PC-9 (cell line): ENCODE measurements at regions of chr22 and their contacts with region 1.

Region 1: GRCh38 chr22:43230971-43231723 is 44.2 kb upstream of the TTLL12 start:
- DNase-seq: peak in 1 of 2 experiments; percentile 77
- H3K4me3 ChIP-seq: no peak overlapping the region
- H3K27ac ChIP-seq: no peak overlapping the region
- H3K4me1 ChIP-seq: no peaks in the 10 kb centered on the region
- H3K27me3 ChIP-seq: peaks cover 46% of the 10 kb centered on the region
- CTCF ChIP-seq: peak; percentile 99

Region 2: DNA sequence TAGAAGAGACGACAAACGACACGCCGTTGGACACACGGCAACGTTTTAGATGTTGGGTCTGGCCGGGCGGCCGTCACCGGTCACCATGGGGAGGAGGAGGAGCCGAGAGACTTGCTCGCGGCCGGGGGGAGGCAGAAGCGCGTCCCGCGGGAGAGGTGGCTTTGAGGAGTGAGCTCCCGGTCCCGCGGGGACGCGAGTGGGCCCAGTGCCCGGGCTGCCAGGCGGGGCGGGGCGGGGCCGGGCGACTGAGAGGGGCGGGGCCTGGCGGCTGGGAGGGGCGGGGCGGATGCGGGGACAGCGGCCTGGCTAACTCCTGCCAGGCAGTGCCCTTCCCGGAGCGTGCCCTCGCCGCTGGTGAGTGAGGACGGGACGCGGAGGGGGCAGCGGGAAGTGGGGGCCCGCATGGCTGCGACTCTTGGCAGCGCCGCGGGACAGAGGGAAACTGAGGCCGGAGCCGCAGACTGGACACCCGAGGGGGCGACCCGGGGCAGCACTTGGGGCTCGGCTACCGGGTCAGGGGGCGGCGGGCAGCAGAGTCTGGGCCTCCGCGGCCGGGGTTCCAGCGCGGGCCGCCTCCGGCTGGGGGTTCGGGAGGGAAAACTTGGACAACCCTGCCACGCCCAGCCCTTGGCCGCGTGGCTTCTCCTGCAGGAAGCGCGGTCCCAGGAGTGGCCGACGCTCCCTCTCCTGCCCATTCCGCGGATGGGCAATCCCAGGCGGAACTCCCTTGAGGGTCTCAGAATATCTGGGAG is 79.7 kb before region 1 on chr22 and contains the start of gene TSPO:
- CTCF ChIA-PET with region 1: no interaction called
- POLR2A ChIA-PET with region 1: no interaction called
- intact Hi-C with region 1: no loop called
- DNase-seq: peak; percentile 34 to 60
- H3K4me3 ChIP-seq: peak within 1 kb of the TSS; percentile 88
- H3K27ac ChIP-seq: peak within 1 kb of the TSS; percentile 45; the same call in 1 of the 2 replicates
- H3K4me1 ChIP-seq: peaks cover 20% of the 10 kb centered on the region
- H3K27me3 ChIP-seq: no peaks in the 10 kb centered on the region
- CTCF ChIP-seq: no peak
- total RNA-seq, gene TSPO: 243 and 308 TPM in 2 replicates

Region 3: GRCh38 chr22:43180670-43181069 is 50.5 kb before region 1 on chr22:
- CTCF ChIA-PET with region 1: interaction called, 9 read pairs
- POLR2A ChIA-PET with region 1: no interaction called
- intact Hi-C with region 1: loop called (anchors 1 kb)
- DNase-seq: no peak
- H3K4me3 ChIP-seq: no peak overlapping the region
- H3K27ac ChIP-seq: no peak overlapping the region
- H3K4me1 ChIP-seq: peaks cover 29% of the 10 kb centered on the region
- H3K27me3 ChIP-seq: no peaks in the 10 kb centered on the region
- CTCF ChIP-seq: no peak

Region 4: GRCh38 chr22:43273902-43274484 is 42.8 kb after region 1 on chr22:
- CTCF ChIA-PET with region 1: interaction called, 4 read pairs
- POLR2A ChIA-PET with region 1: no interaction called
- intact Hi-C with region 1: loop called (anchors 5 kb)
- DNase-seq: peak; percentile 43 to 55
- H3K4me3 ChIP-seq: no peak overlapping the region
- H3K27ac ChIP-seq: no peak overlapping the region
- H3K4me1 ChIP-seq: peaks cover 15% of the 10 kb centered on the region
- H3K27me3 ChIP-seq: peaks cover 25% of the 10 kb centered on the region
- CTCF ChIP-seq: peak; percentile 92

Region 5: GRCh38 chr22:43346521-43346929 is 115.4 kb after region 1 on chr22:
- CTCF ChIA-PET with region 1: interaction called, 8 read pairs
- POLR2A ChIA-PET with region 1: no interaction called
- intact Hi-C with region 1: loop called (anchors 1 kb)
- DNase-seq: peak in 1 of 2 experiments; percentile 66
- H3K4me3 ChIP-seq: no peak overlapping the region
- H3K27ac ChIP-seq: no peak overlapping the region
- H3K4me1 ChIP-seq: no peaks in the 10 kb centered on the region
- H3K27me3 ChIP-seq: peaks cover 64% of the 10 kb centered on the region
- CTCF ChIP-seq: peak; percentile 74

Region 6: GRCh38 chr22:43363315-43364168 is 132.4 kb after region 1 on chr22:
- CTCF ChIA-PET with region 1: no interaction called
- POLR2A ChIA-PET with region 1: interaction called, 34 read pairs
- intact Hi-C with region 1: no loop called
- DNase-seq: no peak
- H3K4me3 ChIP-seq: no peak overlapping the region
- H3K27ac ChIP-seq: no peak overlapping the region
- H3K4me1 ChIP-seq: no peaks in the 10 kb centered on the region
- H3K27me3 ChIP-seq: peaks cover 97% of the 10 kb centered on the region
- CTCF ChIP-seq: no peak

Region 7: DNA sequence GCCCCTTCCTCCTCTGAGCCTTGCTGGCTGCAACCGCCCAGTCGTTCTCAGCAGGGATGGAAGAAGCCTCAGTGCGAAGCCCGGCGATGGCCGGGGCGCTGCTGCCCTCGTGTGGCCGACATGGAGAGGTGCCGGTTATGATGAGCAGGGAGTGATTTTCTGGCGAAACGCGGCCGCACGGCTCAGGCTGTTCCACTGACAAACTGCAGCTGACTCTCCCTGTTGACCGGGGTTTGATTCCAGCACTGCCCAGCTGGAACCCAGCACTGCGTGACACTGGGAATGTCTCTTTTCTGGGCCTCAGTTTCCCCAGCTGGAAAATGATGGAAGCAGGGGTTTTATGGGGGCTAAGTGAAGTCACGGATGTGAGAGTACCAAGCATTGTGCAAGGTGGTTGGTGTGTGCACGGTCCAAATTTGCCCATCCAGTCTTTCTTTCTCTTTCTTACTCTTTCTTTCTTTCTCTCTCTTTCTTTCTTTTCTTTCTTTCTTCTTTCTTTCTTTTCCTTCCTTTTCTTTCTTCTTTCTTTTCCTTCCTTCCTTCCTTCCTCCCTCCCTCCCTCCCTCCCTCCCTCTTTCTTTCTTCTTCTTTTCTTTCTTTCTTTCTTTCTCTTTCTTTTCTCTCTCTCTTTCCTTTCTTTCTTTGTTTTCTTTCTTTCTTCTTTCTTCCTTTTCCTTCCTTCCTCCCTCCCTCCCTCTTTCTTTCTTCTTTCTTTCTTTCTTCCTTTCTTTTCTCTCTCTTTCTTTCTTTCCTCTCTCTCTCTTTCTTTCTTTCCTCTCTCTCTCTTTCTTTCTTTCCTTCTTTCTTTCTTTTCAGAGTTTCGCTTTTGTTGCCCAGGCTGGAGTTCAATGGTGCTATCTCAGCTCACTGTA is 154.9 kb after region 1 on chr22:
- CTCF ChIA-PET with region 1: interaction called, 3 read pairs
- POLR2A ChIA-PET with region 1: no interaction called
- intact Hi-C with region 1: loop called (anchors 1 kb)
- DNase-seq: peak; percentile 48 to 68
- H3K4me3 ChIP-seq: no peak overlapping the region
- H3K27ac ChIP-seq: no peak overlapping the region
- H3K4me1 ChIP-seq: no peaks in the 10 kb centered on the region
- H3K27me3 ChIP-seq: peaks cover 95% of the 10 kb centered on the region
- CTCF ChIP-seq: peak; percentile 96

Region 8: DNA sequence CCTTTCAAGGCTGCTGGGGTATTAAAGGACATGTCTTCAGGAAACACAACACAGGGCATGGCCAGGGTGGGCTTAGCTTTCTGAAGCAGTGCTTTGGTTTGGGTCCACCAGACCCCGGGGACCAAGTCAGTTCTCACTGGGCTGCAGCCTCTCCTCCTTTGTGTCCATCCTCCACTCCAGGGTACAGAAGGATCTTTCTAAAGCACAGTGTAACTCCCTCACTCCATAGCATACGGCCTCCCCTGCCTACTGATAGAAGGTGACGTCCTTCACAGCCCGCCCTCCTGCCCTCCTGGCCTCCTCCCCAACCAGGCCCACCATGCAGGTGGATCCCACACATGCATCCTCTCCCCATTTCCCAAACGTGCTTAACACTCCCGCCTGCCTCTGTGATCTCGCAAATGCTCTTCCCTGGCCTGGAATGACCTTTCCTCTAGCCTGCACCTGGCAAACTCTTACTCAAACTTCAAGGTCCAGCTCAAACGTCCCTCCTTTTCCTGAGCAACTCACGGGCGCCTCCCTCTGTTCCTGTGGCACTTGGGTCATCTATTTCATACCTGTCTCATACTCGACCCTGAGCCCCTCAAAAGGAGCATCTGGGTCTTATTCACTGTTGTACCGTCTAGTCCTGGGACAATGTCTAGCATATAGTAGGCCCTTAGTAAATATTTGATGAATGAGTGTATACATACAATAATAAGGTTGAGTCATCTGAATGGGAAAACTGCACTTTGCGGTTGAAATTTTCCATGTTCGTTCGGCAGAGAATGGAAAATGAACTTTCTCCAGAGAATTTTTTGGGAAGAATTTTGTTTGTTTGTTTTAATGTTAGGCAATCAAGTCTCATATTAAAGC is 393.2 kb after region 1 on chr22:
- CTCF ChIA-PET with region 1: no interaction called
- POLR2A ChIA-PET with region 1: no interaction called
- intact Hi-C with region 1: no loop called
- DNase-seq: peak in 1 of 2 experiments; percentile 44
- H3K4me3 ChIP-seq: no peak overlapping the region
- H3K27ac ChIP-seq: no peak overlapping the region
- H3K4me1 ChIP-seq: no peaks in the 10 kb centered on the region
- H3K27me3 ChIP-seq: peaks cover 64% of the 10 kb centered on the region
- CTCF ChIP-seq: no peak